HCT116 (cell line): ENCODE measurements at regions of chr10 and their contacts with region 1.

Region 1: GRCh38 chr10:25226775-25227682 is 52.2 kb downstream of the GPR158 start:
- DNase-seq: peak; percentile 48
- ATAC-seq: peak; percentile 88
- H3K4me3 ChIP-seq: no peak overlapping the region
- H3K27ac ChIP-seq: no peak overlapping the region
- H3K4me1 ChIP-seq: no peaks in the 10 kb centered on the region
- H3K27me3 ChIP-seq: no peaks in the 10 kb centered on the region
- CTCF ChIP-seq: peak; percentile 67 to 83 (median 78)
- POLR2A ChIP-seq: no peak
- RAD21 ChIP-seq: peak; percentile 78

Region 2: GRCh38 chr10:25026463-25026862 is 200.6 kb before region 1 on chr10:
- CTCF ChIA-PET with region 1: no interaction called
- POLR2A ChIA-PET with region 1: no interaction called
- RAD21 ChIA-PET with region 1: no interaction called
- intact Hi-C with region 1: loop called (anchors 10 kb)
- DNase-seq: no peak
- ATAC-seq: no peak
- H3K4me3 ChIP-seq: no peak overlapping the region
- H3K27ac ChIP-seq: no peak overlapping the region
- H3K4me1 ChIP-seq: peaks cover 0 to 8% of the 10 kb centered on the region in 2 experiments; a peak in 2 of 4 replicates
- H3K27me3 ChIP-seq: no peaks in the 10 kb centered on the region
- CTCF ChIP-seq: peak; percentile 8 to 48 (median 22); a peak in 3 of 6 replicates
- POLR2A ChIP-seq: no peak
- RAD21 ChIP-seq: peak; percentile 65